MCF 10A (cell line): ENCODE measurements at regions of chr1 and their contacts with region 1.

Region 1: DNA sequence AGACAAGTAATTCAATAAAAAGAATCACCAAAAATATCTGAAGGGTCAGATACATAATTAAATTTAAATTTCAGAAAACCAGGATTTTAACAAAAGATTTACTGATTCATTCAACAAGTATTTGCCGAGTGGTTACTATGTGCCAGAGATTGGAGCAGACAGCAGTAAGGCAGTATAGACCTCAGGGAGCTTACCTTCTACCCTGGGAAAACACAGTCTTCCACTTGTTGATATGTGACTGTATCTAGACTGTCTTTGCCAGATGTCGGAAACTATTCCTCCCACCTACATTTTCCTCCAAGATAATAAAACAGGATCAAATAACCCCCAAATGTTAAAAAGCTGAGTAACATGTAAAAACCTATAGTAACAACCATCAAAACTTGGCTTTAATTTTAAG is 6.2 kb downstream of the HNRNPR start:
- DNase-seq: no peak
- H3K4me3 Mint-ChIP-seq: no peak overlapping the region
- H3K27ac Mint-ChIP-seq: no peak overlapping the region
- H3K4me1 Mint-ChIP-seq: peaks cover 44% of the 10 kb centered on the region
- H3K27me3 Mint-ChIP-seq: no peaks in the 10 kb centered on the region
- CTCF ChIP-seq: no peak

Region 2: DNA sequence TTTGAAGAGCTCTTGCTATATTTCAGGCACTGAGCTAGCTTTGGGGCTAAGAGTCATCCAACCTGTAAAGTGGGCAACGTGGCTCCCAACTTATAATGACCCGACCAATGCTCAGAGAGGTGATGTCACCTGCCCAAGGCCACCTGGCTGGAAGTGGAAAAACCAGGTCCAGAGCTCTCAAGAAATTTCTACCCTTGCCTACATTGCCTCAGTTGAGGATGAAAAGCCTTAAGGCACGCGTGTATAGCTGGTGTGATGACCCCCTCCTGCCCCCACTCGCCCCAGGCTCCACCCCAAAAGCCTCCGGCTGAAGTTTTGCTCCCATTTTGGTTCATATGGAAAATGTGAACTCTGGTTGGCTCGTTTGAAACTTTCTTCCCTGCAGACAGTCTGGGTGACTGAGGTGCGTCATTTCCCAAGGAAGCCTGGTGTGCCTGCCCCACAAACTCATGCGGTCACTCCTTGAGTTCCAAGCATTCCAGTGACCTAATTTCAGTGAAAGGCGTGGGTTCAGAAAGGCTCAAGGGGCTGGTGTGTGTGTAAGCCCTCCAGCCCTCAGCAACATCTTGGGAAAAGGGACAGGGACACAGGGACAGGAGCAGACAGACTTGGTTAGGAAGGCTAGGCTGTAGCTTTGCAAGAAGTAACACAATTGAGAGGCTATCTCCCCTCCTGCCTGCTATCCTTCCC is 141.1 kb before region 1 on chr1:
- CTCF ChIA-PET with region 1: no interaction called
- POLR2A ChIA-PET with region 1: no interaction called
- intact Hi-C with region 1: no loop called
- DNase-seq: peak; percentile 92
- H3K4me3 Mint-ChIP-seq: peak overlapping the region; percentile 24
- H3K27ac Mint-ChIP-seq: peak overlapping the region; percentile 89
- H3K4me1 Mint-ChIP-seq: peaks cover 39% of the 10 kb centered on the region
- H3K27me3 Mint-ChIP-seq: no peaks in the 10 kb centered on the region
- CTCF ChIP-seq: no peak

Region 3: DNA sequence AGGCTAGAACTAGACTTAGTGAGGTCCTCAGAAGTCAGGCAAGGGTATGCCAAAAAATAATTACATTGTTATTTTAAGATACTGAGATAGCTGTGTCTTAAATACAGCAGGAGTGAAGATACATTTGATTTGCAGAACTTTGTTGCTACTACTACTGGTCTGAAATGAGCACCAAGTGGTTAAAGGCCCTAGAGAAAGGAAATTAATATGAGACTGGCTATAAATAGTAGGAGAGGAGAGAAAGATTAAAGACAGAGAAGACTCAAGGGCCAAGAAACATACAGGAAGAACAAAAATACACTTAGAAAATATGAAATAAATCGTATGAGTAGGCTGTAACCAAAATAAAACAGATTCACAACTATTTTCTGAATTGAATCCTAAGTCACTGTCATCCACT is 15.1 kb before region 1 on chr1:
- CTCF ChIA-PET with region 1: no interaction called
- POLR2A ChIA-PET with region 1: interaction called, 31 read pairs
- intact Hi-C with region 1: no loop called
- DNase-seq: no peak
- H3K4me3 Mint-ChIP-seq: no peak overlapping the region
- H3K27ac Mint-ChIP-seq: peak overlapping the region; percentile 71
- H3K4me1 Mint-ChIP-seq: peaks cover 8% of the 10 kb centered on the region
- H3K27me3 Mint-ChIP-seq: no peaks in the 10 kb centered on the region
- CTCF ChIP-seq: no peak